HepG2 (cell line): ENCODE measurements at regions of chr16 and their contacts with region 1.

Region 1: DNA sequence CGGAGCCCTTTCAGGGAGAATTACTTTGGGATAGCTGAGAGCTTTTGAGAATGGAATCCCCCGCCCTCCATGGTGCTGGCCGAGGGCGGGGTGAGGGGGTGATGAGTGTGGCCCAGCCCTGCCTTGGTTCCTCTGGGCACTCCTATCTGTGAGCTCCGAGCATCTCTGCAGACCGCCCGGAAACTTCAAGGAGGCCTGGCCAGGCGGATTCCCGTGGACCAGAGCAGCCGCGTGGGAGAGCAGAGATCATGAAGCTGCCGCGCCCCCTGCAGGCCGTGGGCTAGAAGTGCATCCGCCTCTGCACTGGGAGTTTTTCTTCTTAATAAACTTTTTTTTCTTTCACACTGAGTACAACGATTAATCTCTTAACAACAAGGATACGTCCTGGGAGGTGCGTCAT is 392.9 kb upstream of the EEF2KMT start:
- DNase-seq: peak; percentile 43
- ATAC-seq: peak; percentile 71
- H3K4me3 ChIP-seq: no peak overlapping the region
- H3K27ac ChIP-seq: no peak overlapping the region
- H3K4me1 ChIP-seq: no peaks in the 10 kb centered on the region
- H3K27me3 ChIP-seq: peaks cover 0 to 3% of the 10 kb centered on the region in 2 experiments; a peak in 1 of 5 replicates
- CTCF ChIP-seq: peak; percentile 88
- EP300 ChIP-seq: no peak
- POLR2A ChIP-seq: no peak
- RAD21 ChIP-seq: peak; percentile 74

Region 2: DNA sequence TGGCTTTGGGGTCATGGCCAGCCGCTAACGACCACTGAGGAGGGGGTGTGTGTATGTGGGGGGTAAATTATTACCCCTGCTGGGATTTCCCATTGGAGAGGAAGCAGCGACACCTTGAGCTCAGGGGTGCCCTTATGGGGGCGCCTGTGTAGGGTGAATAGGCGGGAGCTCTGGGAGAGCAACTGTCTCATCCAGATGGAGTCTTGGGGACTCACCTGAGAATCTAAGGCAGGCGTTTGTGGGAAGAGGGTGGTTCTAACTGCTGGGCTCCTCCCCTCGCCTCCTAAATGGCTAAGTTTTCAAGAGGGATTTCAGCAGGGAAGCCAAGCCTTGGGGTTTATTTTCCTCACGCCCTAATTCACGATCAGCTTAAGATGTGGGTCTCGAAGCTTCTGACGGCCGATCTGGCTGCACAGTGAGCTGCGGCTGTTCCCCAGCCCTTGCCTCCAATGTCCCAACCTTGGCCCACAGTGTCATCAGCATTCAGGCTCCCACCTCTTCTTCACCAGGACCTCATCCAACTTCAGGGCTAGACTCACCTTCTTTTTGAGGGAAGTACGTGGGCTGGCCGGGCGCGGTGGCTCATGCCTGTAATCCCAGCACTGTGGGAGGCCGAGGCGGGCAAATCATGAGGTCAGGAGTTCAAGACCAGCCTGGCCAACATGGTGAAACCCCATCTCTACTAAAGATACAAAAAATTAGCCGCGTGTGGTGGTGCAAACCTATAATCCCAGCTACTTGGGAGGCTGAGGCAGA is 256.0 kb before region 1 on chr16:
- CTCF ChIA-PET with region 1: interaction called, 4 read pairs
- POLR2A ChIA-PET with region 1: no interaction called
- in situ Hi-C with region 1: loop called (anchors 5 kb)
- intact Hi-C with region 1: loop called (anchors 2 kb)
- DNase-seq: no peak
- ATAC-seq: no peak
- H3K4me3 ChIP-seq: no peak overlapping the region
- H3K27ac ChIP-seq: no peak overlapping the region
- H3K4me1 ChIP-seq: no peaks in the 10 kb centered on the region
- H3K27me3 ChIP-seq: peaks cover 1 to 11% of the 10 kb centered on the region in 2 experiments; a peak in 3 of 5 replicates
- CTCF ChIP-seq: 0 out of 2 replicates have a peak, but pooled peaks have one; percentile 6
- EP300 ChIP-seq: no peak
- POLR2A ChIP-seq: no peak
- RAD21 ChIP-seq: no peak

Region 3: DNA sequence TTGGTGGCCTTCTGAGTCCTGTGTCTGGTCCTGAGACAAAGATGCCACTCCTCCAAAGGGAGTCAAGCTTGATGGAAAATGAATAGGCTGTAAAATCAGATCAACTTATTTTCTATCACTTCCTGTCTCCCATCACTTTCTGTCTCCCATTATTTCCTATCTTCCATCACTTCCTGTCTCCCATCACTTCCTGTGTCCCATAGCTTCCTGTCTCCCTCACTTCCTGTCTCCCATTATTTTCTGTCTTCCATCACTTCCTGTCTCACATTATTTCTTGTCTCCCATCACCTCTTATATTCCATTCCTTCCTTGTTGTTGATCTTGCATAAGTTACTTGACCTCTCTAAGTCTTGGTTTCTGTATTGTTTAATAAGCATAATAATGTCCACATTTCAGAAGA is 25.6 kb after region 1 on chr16:
- CTCF ChIA-PET with region 1: no interaction called
- POLR2A ChIA-PET with region 1: no interaction called
- in situ Hi-C with region 1: no loop called
- intact Hi-C with region 1: no loop called
- DNase-seq: no peak
- ATAC-seq: no peak
- H3K4me3 ChIP-seq: no peak overlapping the region
- H3K27ac ChIP-seq: no peak overlapping the region
- H3K4me1 ChIP-seq: no peaks in the 10 kb centered on the region
- H3K27me3 ChIP-seq: no peaks in the 10 kb centered on the region
- CTCF ChIP-seq: no peak
- EP300 ChIP-seq: no peak
- POLR2A ChIP-seq: no peak
- RAD21 ChIP-seq: no peak